PC-9 (cell line): ENCODE measurements at regions of chr11 and their contacts with region 1.

Region 1: GRCh38 chr11:76444384-76445123 is at the start of gene EMSY:
- DNase-seq: peak; percentile 95 to 97
- H3K4me3 ChIP-seq: peak within 1 kb of the TSS; percentile 73
- H3K27ac ChIP-seq: peak within 1 kb of the TSS; percentile 66
- H3K4me1 ChIP-seq: peaks cover 20% of the 10 kb centered on the region
- H3K27me3 ChIP-seq: no peaks in the 10 kb centered on the region
- CTCF ChIP-seq: no peak
- total RNA-seq, gene EMSY: 24.9 and 37.4 TPM in 2 replicates

Region 2: GRCh38 chr11:76228071-76228874 is 216.3 kb before region 1 on chr11:
- CTCF ChIA-PET with region 1: no interaction called
- POLR2A ChIA-PET with region 1: interaction called, 16 read pairs
- intact Hi-C with region 1: no loop called
- DNase-seq: no peak
- H3K4me3 ChIP-seq: no peak overlapping the region
- H3K27ac ChIP-seq: no peak overlapping the region
- H3K4me1 ChIP-seq: no peaks in the 10 kb centered on the region
- H3K27me3 ChIP-seq: no peaks in the 10 kb centered on the region
- CTCF ChIP-seq: no peak

Region 3: GRCh38 chr11:76347466-76347865 is 97.1 kb before region 1 on chr11:
- CTCF ChIA-PET with region 1: no interaction called
- POLR2A ChIA-PET with region 1: interaction called, 14 read pairs
- intact Hi-C with region 1: no loop called
- DNase-seq: no peak
- H3K4me3 ChIP-seq: no peak overlapping the region
- H3K27ac ChIP-seq: no peak overlapping the region
- H3K4me1 ChIP-seq: no peaks in the 10 kb centered on the region
- H3K27me3 ChIP-seq: no peaks in the 10 kb centered on the region
- CTCF ChIP-seq: no peak

Region 4: DNA sequence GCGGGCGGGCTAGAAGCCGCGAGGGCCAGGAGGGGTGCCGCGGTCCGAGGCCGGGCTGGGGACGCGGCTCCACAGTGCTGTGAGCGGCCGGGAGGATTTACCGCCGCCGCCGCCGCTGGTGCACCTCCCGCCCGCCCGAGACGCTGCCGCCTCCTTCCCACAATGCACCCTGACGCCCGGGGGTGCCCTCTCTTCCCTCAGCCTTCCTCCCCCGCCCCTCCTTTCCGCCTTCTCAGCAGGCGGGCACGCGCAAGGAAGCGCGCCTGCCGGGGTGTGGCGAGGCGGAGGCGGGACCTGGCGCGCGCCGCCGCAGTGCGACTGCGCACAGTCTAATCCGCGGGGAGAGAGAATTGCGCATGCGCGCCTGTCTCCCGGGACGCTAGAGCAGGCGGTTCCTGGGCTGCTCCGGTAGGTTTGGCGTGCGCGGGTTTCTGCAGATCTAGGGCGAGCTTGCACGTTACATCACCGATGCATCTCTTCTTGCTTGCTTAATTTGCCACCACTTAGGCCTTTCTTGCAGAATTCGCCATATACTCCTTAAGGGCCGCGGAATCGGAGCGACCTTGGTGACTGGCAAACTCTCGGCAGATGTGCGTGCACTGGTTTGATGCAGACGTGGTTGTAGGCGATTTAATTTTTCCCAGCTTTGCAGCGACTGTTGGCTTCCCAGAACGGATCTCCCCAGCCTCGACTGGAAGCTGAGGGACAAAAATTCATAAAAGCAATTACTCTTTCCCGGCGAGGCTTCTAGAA is 63.4 kb before region 1 on chr11 and contains the starts of genes GVQW3 and THAP12:
- CTCF ChIA-PET with region 1: no interaction called
- POLR2A ChIA-PET with region 1: no interaction called
- intact Hi-C with region 1: loop called (anchors 1 kb)
- DNase-seq: peak; percentile 91 to 99
- H3K4me3 ChIP-seq: peak within 1 kb of the TSS; percentile 95
- H3K27ac ChIP-seq: peak within 1 kb of the TSS; percentile 23; the same call in 1 of the 2 replicates
- H3K4me1 ChIP-seq: peaks cover 23% of the 10 kb centered on the region
- H3K27me3 ChIP-seq: no peaks in the 10 kb centered on the region
- CTCF ChIP-seq: no peak
- total RNA-seq, gene GVQW3: 11.1 and 12.5 TPM in 2 replicates
- total RNA-seq, gene THAP12: 47.0 and 52.3 TPM in 2 replicates

Region 5: DNA sequence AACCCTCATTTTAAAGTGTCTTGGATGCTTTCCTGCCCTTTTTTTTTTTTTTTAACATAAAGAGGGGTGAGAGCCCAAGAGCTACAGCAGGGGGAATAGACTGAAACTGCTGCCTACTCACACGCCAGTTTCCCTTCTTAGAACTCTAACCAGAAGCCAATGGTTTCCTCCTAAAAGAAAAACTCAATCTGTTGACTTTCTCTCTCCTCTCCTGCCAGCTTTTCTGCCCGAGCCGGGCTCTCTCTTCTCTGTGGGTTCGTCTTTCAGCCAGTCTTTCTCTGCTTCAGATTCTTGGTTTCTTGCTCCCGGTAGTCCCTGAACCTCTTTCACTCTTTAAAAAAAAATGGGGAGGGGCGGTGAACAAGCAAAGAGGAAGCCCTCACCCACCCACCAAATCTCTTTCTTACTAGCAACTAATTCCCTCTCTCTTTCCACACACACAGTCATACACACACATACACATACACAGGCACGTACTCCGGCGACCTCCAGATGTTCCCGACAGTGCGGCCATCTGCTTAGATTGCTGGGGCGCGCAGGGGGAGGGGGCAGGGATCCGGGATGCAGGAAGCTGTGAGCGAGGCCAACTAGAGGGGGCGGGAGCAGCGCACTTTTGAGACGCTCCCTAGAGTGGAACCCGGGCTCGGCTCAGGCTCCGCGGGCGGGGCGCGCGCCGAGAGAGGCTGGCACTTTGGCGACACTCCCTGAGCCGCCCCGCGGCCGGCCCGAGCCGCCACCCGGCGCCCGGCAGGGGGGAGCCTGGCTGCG is 338.2 kb after region 1 on chr11:
- CTCF ChIA-PET with region 1: no interaction called
- POLR2A ChIA-PET with region 1: no interaction called
- intact Hi-C with region 1: loop called (anchors 10 kb)
- DNase-seq: peak; percentile 77 to 94
- H3K4me3 ChIP-seq: peak overlapping the region; percentile 94
- H3K27ac ChIP-seq: peak overlapping the region; percentile 85
- H3K4me1 ChIP-seq: peaks cover 40% of the 10 kb centered on the region
- H3K27me3 ChIP-seq: no peaks in the 10 kb centered on the region
- CTCF ChIP-seq: no peak

Region 6: GRCh38 chr11:76835928-76836612 is 391.5 kb after region 1 on chr11:
- CTCF ChIA-PET with region 1: no interaction called
- POLR2A ChIA-PET with region 1: interaction called, 11 read pairs
- intact Hi-C with region 1: no loop called
- DNase-seq: peak; percentile 39 to 57
- H3K4me3 ChIP-seq: no peak overlapping the region
- H3K27ac ChIP-seq: no peak overlapping the region
- H3K4me1 ChIP-seq: peaks cover 44% of the 10 kb centered on the region
- H3K27me3 ChIP-seq: no peaks in the 10 kb centered on the region
- CTCF ChIP-seq: no peak